Activated CD4-positive, alpha-beta T cell treated with anti-CD3 and anti-CD28 coated beads for 36 hours (primary cell): ENCODE measurements at regions of chr22 and their contacts with region 1.

Region 1: DNA sequence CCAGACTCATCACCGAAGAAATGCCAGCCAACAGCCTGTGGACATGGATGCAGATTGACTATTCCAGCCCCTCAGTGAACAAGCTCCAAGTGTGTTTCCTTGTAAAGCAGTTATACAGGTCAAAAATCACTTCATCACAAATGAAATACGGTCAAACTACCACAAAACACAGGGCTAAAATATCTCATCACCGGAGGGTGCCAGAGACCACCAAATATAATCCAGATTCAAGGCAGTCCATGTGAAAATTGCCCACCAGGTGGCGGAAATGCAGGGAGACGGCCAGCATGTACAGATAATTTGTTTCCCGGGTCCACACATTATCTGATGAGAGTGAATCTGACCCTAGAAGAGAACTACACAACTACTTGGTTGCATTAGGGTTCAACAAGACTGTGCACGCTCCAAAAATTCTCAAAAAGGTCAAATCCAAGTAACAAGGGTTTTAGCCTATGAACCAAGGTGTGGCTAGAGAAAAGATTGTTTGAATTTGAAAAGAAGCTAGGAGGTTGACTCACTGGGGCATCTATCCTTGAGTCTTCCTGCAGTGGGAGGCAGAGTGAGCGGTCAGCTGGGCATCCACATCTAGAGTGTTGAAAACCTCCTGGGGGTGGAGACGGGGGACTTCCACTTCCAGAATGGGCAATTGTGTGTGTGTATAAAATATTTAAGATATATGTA is 71.7 kb downstream of the IGLL5 start:
- DNase-seq: peak; percentile 85
- ATAC-seq: peak; percentile 70
- H3K4me3 Mint-ChIP-seq: no peak overlapping the region
- H3K27ac Mint-ChIP-seq: no peak overlapping the region
- H3K4me1 Mint-ChIP-seq: peaks cover 3% of the 10 kb centered on the region
- H3K27me3 Mint-ChIP-seq: peaks cover 24% of the 10 kb centered on the region

Region 2: GRCh38 chr22:22588485-22589164 is 370.7 kb before region 1 on chr22:
- CTCF ChIA-PET with region 1: interaction called, 5 read pairs
- POLR2A ChIA-PET with region 1: no interaction called
- intact Hi-C with region 1: loop called in 1 of 2 experiments (anchors 5 kb)
- DNase-seq: no peak
- ATAC-seq: no peak
- H3K4me3 Mint-ChIP-seq: no peak overlapping the region
- H3K27ac Mint-ChIP-seq: no peak overlapping the region
- H3K4me1 Mint-ChIP-seq: no peaks in the 10 kb centered on the region
- H3K27me3 Mint-ChIP-seq: peaks cover 10% of the 10 kb centered on the region

Region 3: DNA sequence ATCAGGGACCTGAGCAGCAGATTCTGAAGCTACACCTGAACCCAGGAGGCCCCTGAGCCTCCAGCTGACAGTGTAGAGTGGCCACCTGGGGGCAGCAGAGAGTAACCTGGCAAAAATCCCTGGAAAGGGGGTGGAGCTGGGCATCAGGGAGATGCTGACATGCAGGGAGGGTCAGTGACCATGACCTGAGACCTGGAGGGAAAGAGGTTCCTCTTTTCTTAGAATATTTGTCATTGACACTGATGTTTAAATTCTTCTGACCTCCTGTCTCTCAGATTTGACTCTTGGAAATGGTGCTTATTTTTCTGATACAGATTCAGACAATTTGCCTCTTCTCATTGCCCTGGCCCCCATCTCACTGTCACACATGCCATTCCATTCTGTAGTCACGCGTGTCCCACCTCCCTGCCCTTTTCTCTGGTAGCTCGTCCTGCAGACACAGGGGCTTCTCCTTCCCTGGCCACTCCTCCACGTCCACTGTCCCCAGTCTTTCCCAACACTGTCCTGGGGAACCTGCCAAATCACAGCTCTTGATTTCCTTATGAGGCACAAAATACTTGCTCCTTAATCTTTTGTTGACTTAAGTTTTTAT is 188.9 kb before region 1 on chr22:
- CTCF ChIA-PET with region 1: interaction called, 11 read pairs
- POLR2A ChIA-PET with region 1: no interaction called
- intact Hi-C with region 1: no loop called
- DNase-seq: peak; percentile 74
- ATAC-seq: peak; percentile 71
- H3K4me3 Mint-ChIP-seq: no peak overlapping the region
- H3K27ac Mint-ChIP-seq: no peak overlapping the region
- H3K4me1 Mint-ChIP-seq: peaks cover 2% of the 10 kb centered on the region
- H3K27me3 Mint-ChIP-seq: peaks cover 6% of the 10 kb centered on the region

Region 4: DNA sequence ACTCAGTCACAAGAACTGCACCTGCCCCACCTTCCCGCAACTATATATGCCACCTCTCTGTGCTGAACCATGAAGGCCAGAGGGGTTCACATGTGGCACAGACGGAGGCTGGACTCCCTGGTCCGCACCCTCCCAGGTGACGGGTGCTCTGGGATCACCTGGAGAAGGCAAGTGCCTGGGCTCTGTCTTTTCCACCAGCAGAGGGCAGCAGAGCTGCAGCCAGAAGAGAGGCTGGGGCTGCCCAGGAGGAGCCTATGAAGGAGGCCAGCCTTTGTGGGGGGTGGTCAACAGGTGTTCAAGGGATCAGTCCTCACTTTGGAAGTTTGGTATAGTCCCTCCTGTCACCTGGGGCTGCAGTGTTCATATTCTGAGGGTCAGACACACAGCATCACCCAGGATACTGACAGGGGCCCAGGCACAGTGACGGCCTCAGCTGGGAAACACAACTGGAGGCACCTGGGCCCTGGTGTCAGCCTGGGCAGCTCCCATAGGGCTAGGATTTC is 110.9 kb before region 1 on chr22:
- CTCF ChIA-PET with region 1: interaction called, 31 read pairs
- POLR2A ChIA-PET with region 1: no interaction called
- intact Hi-C with region 1: loop called (anchors 2 kb)
- DNase-seq: peak; percentile 85
- ATAC-seq: peak; percentile 92
- H3K4me3 Mint-ChIP-seq: no peak overlapping the region
- H3K27ac Mint-ChIP-seq: no peak overlapping the region
- H3K4me1 Mint-ChIP-seq: peaks cover 34% of the 10 kb centered on the region
- H3K27me3 Mint-ChIP-seq: no peaks in the 10 kb centered on the region

Region 5: DNA sequence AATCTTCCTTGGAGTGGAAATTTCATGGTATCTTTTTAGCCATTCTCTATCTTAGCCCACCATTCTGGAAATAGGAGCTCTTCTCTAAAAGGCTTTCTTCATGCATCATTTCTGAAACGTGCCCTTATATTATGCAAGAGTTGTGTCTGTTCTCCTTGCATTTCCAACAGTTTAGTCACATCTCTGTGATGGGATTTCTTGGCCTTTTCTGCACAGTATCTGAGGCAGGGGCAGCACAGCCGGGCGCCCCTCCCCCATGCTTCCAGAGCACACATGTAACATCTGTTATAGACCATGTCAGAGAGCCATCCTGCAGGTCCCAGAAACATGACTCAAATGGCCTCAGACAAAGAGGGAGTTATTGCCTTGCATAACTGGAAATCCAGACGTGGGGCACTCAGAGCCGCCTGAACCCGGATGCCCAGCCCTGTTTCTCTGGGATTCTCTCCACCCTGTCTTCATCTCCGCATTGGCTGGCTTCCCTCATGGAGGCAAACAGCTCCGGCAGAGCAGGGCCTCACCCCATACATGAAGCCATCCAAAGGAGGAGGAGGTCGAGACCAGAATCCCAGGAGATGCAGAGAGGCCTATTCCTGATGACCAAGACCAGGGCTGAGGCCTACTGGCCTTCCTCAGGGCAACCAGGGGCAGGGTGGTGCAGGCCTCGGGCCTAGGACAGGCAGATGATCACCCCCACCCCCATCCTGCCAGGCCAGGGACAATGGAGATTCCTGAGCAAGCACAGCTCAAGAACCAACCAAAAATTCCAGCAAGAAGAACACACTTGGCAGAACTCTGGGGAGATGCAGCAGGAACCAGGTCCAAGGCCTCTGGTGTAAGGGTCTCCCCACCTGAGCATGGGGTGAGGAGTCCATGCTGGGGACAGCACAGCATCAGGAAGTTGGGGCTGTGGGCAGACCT is 10.4 kb before region 1 on chr22:
- CTCF ChIA-PET with region 1: interaction called, 10 read pairs
- POLR2A ChIA-PET with region 1: no interaction called
- intact Hi-C with region 1: no loop called
- DNase-seq: no peak
- ATAC-seq: no peak
- H3K4me3 Mint-ChIP-seq: no peak overlapping the region
- H3K27ac Mint-ChIP-seq: no peak overlapping the region
- H3K4me1 Mint-ChIP-seq: no peaks in the 10 kb centered on the region
- H3K27me3 Mint-ChIP-seq: peaks cover 13% of the 10 kb centered on the region

Region 6: GRCh38 chr22:23178512-23179254 is 219.4 kb after region 1 on chr22:
- CTCF ChIA-PET with region 1: interaction called, 4 read pairs
- POLR2A ChIA-PET with region 1: no interaction called
- intact Hi-C with region 1: loop called in 1 of 2 experiments (anchors 1 kb)
- DNase-seq: peak; percentile 77
- ATAC-seq: no peak
- H3K4me3 Mint-ChIP-seq: peak overlapping the region; percentile 58
- H3K27ac Mint-ChIP-seq: no peak overlapping the region
- H3K4me1 Mint-ChIP-seq: peaks cover 39% of the 10 kb centered on the region
- H3K27me3 Mint-ChIP-seq: no peaks in the 10 kb centered on the region